ENCODE measurements at regions of chr18 and their contacts with region 1.

Region 1: DNA sequence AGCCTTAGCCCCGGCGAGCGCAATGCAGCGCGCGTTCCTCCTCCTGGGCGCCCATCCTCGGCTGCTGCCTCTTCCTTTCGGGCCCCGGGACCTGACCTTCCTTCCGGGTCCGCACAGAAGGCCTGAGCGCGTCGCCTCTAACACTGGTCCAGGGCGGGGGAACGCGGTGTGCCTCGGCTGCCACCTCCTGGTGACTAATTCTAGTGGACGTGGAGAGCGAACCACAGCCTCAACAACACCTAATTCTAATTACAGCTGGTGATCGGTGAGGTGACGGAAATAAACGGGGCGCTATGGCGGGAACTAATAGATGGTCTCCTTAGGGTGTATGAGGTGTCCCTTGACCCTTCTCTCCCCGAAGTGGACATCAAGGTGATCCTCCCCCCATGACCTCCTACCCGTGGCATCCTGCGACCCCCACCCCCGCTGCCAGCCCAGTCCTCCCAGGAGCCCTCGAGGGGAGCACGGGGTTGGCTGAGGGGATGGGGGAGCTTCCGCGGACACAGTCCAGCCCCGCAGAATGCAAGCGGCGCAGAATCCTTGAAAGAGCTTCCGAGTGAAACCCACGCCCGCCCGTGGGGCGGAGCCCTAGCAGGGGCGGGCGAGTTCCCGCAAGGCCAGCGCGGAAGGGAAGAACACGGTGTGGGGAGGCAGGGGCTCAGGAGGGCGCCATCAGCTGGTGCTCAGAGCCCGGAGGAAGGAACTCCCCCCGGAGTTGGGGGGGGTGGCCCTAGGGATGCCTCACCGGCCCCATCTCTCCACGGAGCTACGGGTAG is 12.8 kb upstream of the HMSD start:
- DNase-seq: peak; percentile 78 to 88 (median 86)
- H3K4me3 ChIP-seq: peak overlapping the region; percentile 39 to 80 (median 67)
- H3K27ac ChIP-seq: no peak overlapping the region
- H3K4me1 ChIP-seq: peaks cover 6 to 15% (median 14%) of the 10 kb centered on the region in 4 experiments
- H3K27me3 ChIP-seq: peaks cover 0 to 5% (median 0%) of the 10 kb centered on the region in 5 experiments

Region 2: DNA sequence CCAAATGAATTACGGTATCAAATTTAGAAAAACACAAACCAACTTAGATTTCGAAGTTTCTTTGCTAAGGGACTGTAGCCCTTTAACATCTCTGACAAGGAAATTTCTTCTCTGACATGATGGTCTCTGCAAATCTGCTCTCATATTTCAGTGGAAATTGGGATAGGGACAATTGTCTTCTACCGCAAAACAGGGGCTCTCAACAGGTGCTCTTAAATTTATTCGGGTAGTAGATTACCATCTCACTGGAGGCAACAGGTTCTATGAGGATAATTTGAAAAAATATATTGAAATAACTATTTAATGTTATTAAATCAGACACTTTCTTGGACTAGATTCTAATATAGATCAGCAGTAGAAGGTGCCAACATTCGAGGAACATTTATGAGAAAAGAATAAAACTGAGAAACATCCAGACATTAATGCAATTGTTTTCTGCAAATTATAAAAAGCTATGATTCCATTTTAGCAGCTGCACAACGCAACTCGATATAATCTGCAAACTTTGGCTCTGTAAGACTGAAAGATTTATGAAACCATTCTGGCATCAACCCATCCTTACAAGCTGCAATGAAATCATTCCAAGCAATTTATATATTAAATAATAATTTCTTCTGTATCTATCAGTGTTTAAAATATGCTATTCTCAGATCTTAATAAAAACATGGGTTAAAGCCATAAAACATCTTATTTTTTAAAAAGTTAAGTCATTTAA is 606.8 kb before region 1 on chr18:
- CTCF ChIA-PET with region 1: no interaction called
- POLR2A ChIA-PET with region 1: no interaction called
- DNase-seq: no peak
- H3K4me3 ChIP-seq: no peak overlapping the region
- H3K27ac ChIP-seq: no peak overlapping the region
- H3K4me1 ChIP-seq: no peaks in the 10 kb centered on the region
- H3K27me3 ChIP-seq: no peaks in the 10 kb centered on the region

Region 3: DNA sequence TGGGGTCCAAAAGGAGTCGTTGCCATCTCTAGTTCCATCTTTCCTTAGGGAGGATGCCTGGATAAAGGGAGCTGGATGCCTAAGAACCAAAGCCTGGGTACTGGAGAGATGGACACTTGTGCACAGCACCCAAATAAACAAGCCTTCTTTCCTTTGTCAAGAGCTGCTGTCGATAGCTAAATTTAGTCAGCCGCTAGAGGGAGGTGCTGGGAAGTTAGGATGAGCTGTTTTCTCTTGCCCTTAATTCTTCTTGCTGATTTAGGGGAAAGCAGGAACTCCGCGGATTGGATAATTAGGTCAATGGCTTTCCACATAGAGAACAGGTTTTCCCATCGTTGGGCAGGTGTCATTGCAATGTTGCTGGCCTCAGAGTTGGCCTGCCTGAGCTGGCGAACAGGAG is 425.1 kb before region 1 on chr18:
- CTCF ChIA-PET with region 1: interaction called, 16 read pairs
- POLR2A ChIA-PET with region 1: no interaction called
- DNase-seq: peak; percentile 42 to 54 (median 54)
- H3K4me3 ChIP-seq: no peak overlapping the region
- H3K27ac ChIP-seq: no peak overlapping the region
- H3K4me1 ChIP-seq: peaks cover 0 to 13% (median 0%) of the 10 kb centered on the region in 4 experiments
- H3K27me3 ChIP-seq: no peaks in the 10 kb centered on the region

Region 4: GRCh38 chr18:63637703-63638102 is 298.6 kb before region 1 on chr18:
- CTCF ChIA-PET with region 1: no interaction called
- POLR2A ChIA-PET with region 1: no interaction called
- DNase-seq: no peak
- H3K4me3 ChIP-seq: no peak overlapping the region
- H3K27ac ChIP-seq: no peak overlapping the region
- H3K4me1 ChIP-seq: no peaks in the 10 kb centered on the region
- H3K27me3 ChIP-seq: no peaks in the 10 kb centered on the region

Region 5: DNA sequence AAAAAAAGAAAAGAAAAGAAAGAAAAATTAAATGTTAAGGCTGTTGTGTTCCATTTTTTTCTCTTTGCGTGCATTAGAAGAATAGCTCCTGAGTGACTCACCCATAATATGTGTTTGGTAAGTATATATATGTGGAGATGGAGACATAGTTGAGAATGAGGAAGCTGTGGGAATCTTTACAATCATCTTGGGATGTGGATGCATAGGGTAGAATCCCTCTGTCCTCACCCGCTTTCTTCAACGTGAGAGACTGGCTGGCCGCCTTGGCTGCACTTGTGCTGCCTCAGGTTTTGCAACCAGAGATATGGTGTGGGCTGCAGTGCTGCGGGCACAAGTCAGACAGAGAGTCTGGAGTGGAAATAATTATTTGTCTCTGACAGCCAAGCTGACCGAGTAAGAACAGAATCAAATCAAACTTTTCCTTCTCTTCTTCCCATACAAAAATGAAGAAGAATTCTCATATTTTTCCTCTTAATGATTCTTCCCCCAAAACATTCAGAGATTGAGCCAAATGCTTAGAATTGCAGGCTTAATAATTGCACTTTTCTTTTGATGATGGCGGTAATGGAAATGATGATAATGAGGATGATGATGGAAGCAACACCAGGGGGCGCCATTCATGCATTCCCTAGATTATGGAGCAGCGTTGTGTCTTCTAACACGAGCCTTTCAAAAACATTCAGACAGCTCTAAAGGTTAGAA is 112.7 kb before region 1 on chr18:
- CTCF ChIA-PET with region 1: interaction called, 10 read pairs
- POLR2A ChIA-PET with region 1: no interaction called
- DNase-seq: peak; percentile 29 to 59 (median 44)
- H3K4me3 ChIP-seq: no peak overlapping the region
- H3K27ac ChIP-seq: no peak overlapping the region
- H3K4me1 ChIP-seq: no peaks in the 10 kb centered on the region
- H3K27me3 ChIP-seq: no peaks in the 10 kb centered on the region

Region 6: DNA sequence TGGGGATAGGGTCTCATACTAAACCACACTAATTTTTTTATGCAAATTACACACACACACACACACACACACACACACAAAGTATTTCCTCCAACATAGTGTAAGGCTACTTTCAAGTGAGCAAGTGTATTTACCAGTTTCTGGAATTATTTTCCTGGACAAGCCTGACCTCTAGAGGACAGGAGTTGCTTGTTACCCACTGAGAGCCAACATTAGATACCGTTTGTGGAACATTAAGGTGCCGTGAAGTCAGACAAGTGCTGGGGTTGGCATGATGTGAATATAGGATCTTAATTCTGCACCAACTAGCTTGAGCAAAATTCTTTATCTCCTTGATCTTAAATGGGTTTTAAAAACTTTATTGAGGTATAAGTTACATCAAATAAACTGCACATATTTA is 88.2 kb before region 1 on chr18:
- CTCF ChIA-PET with region 1: interaction called, 13 read pairs
- POLR2A ChIA-PET with region 1: no interaction called
- DNase-seq: peak; percentile 73 to 87 (median 81)
- H3K4me3 ChIP-seq: no peak overlapping the region
- H3K27ac ChIP-seq: no peak overlapping the region
- H3K4me1 ChIP-seq: no peaks in the 10 kb centered on the region
- H3K27me3 ChIP-seq: no peaks in the 10 kb centered on the region

Region 7: GRCh38 chr18:63953811-63954210 is 17.5 kb after region 1 on chr18:
- CTCF ChIA-PET with region 1: interaction called, 42 read pairs
- POLR2A ChIA-PET with region 1: no interaction called
- DNase-seq: peak in 2 of 3 donors; percentile 21 to 22
- H3K4me3 ChIP-seq: no peak overlapping the region
- H3K27ac ChIP-seq: no peak overlapping the region
- H3K4me1 ChIP-seq: peaks cover 0 to 5% (median 2%) of the 10 kb centered on the region in 4 experiments
- H3K27me3 ChIP-seq: peaks cover 0 to 6% (median 0%) of the 10 kb centered on the region in 5 experiments

Region 8: GRCh38 chr18:63963615-63964256 is 27.4 kb after region 1 on chr18:
- CTCF ChIA-PET with region 1: interaction called, 42 read pairs
- POLR2A ChIA-PET with region 1: no interaction called
- DNase-seq: peak; percentile 64 to 83 (median 76)
- H3K4me3 ChIP-seq: no peak overlapping the region
- H3K27ac ChIP-seq: no peak overlapping the region
- H3K4me1 ChIP-seq: no peaks in the 10 kb centered on the region
- H3K27me3 ChIP-seq: peaks cover 0 to 11% (median 0%) of the 10 kb centered on the region in 5 experiments